CD4-positive, alpha-beta T cell (primary cell): ENCODE measurements at regions of chr1 and their contacts with region 1.

Region 1: GRCh38 chr1:29235955-29236684 is at the start of gene PTPRU:
- DNase-seq: peak; percentile 39 to 89 (median 77)
- ATAC-seq: peak; percentile 88
- H3K4me3 ChIP-seq: peak within 1 kb of the TSS; percentile 39
- H3K4me3 Mint-ChIP-seq: peak within 1 kb of the TSS; percentile 82
- H3K27ac ChIP-seq: no peak within 1 kb of the TSS
- H3K27ac Mint-ChIP-seq: peak within 1 kb of the TSS; percentile 25
- H3K4me1 ChIP-seq: peaks cover 26% of the 10 kb centered on the region
- H3K4me1 Mint-ChIP-seq: peaks cover 28% of the 10 kb centered on the region
- H3K27me3 ChIP-seq: peaks cover 34 to 48% of the 10 kb centered on the region in 2 experiments
- H3K27me3 Mint-ChIP-seq: peaks cover 57% of the 10 kb centered on the region
- CTCF ChIP-seq: peak; percentile 62
- total RNA-seq, gene PTPRU: 0.16 to 0.56 TPM

Region 2: GRCh38 chr1:29706956-29707355 is 470.8 kb after region 1 on chr1:
- CTCF ChIA-PET with region 1: no interaction called
- POLR2A ChIA-PET with region 1: no interaction called
- intact Hi-C with region 1: loop called in 1 of 2 experiments (anchors 5 kb)
- DNase-seq: peak in 3 of 14 experiments; percentile 5 to 23 (median 13)
- ATAC-seq: peak; percentile 59
- H3K4me3 ChIP-seq: no peak overlapping the region
- H3K4me3 Mint-ChIP-seq: no peak overlapping the region
- H3K27ac ChIP-seq: no peak overlapping the region
- H3K27ac Mint-ChIP-seq: no peak overlapping the region
- H3K4me1 ChIP-seq: no peaks in the 10 kb centered on the region
- H3K4me1 Mint-ChIP-seq: no peaks in the 10 kb centered on the region
- H3K27me3 ChIP-seq: peaks cover 27 to 37% of the 10 kb centered on the region in 2 experiments
- H3K27me3 Mint-ChIP-seq: peaks cover 65% of the 10 kb centered on the region
- CTCF ChIP-seq: no peak

Region 3: DNA sequence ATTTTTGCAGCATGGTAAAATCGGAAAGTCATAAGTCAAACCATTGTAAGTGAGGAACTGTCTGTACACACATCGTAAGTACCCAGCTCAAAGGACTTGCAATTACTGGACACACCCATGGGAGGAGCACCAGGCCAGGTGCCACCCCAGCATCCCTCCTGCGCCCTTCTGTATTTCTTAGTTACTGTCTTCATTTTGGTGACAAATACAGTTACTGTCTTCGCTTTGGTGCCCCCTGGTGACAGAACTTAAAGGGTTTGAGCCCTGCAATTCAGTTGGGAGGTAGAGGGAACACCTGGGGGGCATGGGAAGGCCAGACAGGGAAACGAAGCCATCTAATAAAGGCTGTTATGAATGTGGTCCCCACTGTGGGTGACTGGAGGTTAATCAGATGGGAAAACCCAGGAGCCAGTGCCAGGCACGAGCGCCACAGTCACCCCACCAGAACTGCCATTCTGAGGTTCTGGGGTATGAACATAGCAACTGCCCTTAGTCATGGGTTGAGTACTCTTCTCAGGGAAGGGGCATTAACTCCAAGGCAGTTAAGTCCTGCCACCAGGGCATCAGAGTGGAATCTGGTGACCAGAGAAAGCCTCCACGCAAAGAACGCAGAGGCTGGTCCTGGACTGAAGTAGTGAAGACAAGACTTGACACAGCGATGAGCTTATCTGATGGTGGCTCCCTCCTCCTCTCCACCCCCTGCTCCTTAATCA is 613.1 kb after region 1 on chr1:
- CTCF ChIA-PET with region 1: no interaction called
- POLR2A ChIA-PET with region 1: no interaction called
- intact Hi-C with region 1: loop called in 1 of 2 experiments (anchors 1 kb)
- DNase-seq: peak in 11 of 14 experiments; percentile 2 to 58 (median 27)
- ATAC-seq: no peak
- H3K4me3 ChIP-seq: no peak overlapping the region
- H3K4me3 Mint-ChIP-seq: no peak overlapping the region
- H3K27ac ChIP-seq: no peak overlapping the region
- H3K27ac Mint-ChIP-seq: no peak overlapping the region
- H3K4me1 ChIP-seq: no peaks in the 10 kb centered on the region
- H3K4me1 Mint-ChIP-seq: no peaks in the 10 kb centered on the region
- H3K27me3 ChIP-seq: peaks cover 9% of the 10 kb centered on the region in 2 experiments
- H3K27me3 Mint-ChIP-seq: peaks cover 22% of the 10 kb centered on the region
- CTCF ChIP-seq: no peak

Region 4: GRCh38 chr1:30106125-30106524 is 870.0 kb after region 1 on chr1:
- CTCF ChIA-PET with region 1: no interaction called
- POLR2A ChIA-PET with region 1: no interaction called
- intact Hi-C with region 1: loop called in 1 of 2 experiments (anchors 2 kb)
- DNase-seq: peak in 1 of 14 experiments; percentile 4
- ATAC-seq: no peak
- H3K4me3 ChIP-seq: no peak overlapping the region
- H3K4me3 Mint-ChIP-seq: no peak overlapping the region
- H3K27ac ChIP-seq: no peak overlapping the region
- H3K27ac Mint-ChIP-seq: no peak overlapping the region
- H3K4me1 ChIP-seq: no peaks in the 10 kb centered on the region
- H3K4me1 Mint-ChIP-seq: no peaks in the 10 kb centered on the region
- H3K27me3 ChIP-seq: peaks cover 3 to 12% of the 10 kb centered on the region in 2 experiments
- H3K27me3 Mint-ChIP-seq: peaks cover 60% of the 10 kb centered on the region
- CTCF ChIP-seq: peak; percentile 20

Region 5: GRCh38 chr1:30379684-30380624 is 1143.8 kb after region 1 on chr1:
- CTCF ChIA-PET with region 1: interaction called, 9 read pairs
- POLR2A ChIA-PET with region 1: interaction called, 4 read pairs
- intact Hi-C with region 1: loop called (anchors 1 kb)
- DNase-seq: peak in 13 of 14 experiments; percentile 10 to 78 (median 33)
- ATAC-seq: peak; percentile 48
- H3K4me3 ChIP-seq: no peak overlapping the region
- H3K4me3 Mint-ChIP-seq: no peak overlapping the region
- H3K27ac ChIP-seq: no peak overlapping the region
- H3K27ac Mint-ChIP-seq: no peak overlapping the region
- H3K4me1 ChIP-seq: peaks cover 5% of the 10 kb centered on the region
- H3K4me1 Mint-ChIP-seq: no peaks in the 10 kb centered on the region
- H3K27me3 ChIP-seq: peaks cover 4 to 11% of the 10 kb centered on the region in 2 experiments
- H3K27me3 Mint-ChIP-seq: peaks cover 36% of the 10 kb centered on the region
- CTCF ChIP-seq: peak; percentile 75

Region 6: DNA sequence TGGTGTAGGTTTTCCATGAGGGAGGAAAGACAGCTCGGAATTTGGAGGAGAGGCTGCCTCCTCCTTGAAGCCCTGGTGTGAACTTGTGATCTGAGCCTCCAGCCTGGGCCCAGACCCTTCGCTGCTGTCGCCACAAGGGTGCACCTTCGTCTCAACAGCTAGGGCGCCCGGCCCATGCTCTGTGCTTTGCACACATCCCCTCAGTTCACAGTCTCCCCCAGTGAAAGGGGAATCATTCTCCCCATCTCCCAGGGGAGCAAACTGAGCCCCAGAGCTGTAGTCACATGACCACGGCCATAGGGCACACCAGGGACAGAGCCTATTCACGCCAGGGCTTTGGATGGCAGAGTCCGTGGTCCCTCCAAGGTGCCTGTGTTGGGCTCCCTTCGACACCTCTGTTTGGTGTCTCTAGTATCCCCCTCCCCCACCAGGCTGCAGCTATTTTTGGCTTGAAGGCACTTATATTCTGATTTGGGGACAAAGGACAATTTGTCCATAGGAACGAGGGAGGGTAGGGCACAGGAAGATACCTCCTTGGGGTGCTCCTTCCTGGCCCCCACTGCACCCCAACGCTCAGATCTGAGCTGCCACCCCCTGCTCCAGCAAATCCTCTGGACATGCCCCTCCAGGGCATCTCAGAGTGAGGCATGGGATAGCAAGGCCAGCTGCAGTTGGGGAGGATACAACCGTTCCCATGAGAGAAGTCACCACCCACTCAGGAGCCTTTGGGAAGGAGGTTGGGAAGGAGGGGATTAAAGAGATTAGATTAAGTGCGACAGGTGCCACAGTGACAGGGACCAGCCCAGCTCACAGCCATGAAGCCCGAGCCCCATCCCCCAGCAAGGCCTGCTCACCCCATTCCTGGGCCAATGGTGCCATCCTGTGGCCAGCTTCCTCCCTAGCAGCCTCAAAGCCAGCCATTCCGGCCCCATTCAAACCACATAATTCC is 1471.6 kb after region 1 on chr1:
- CTCF ChIA-PET with region 1: no interaction called
- POLR2A ChIA-PET with region 1: no interaction called
- intact Hi-C with region 1: loop called in 1 of 2 experiments (anchors 2 kb)
- DNase-seq: peak; percentile 40 to 74 (median 56)
- ATAC-seq: peak; percentile 88
- H3K4me3 ChIP-seq: no peak overlapping the region
- H3K4me3 Mint-ChIP-seq: no peak overlapping the region
- H3K27ac ChIP-seq: no peak overlapping the region
- H3K27ac Mint-ChIP-seq: no peak overlapping the region
- H3K4me1 ChIP-seq: no peaks in the 10 kb centered on the region
- H3K4me1 Mint-ChIP-seq: no peaks in the 10 kb centered on the region
- H3K27me3 ChIP-seq: peaks cover 0 to 6% of the 10 kb centered on the region in 2 experiments
- H3K27me3 Mint-ChIP-seq: peaks cover 19% of the 10 kb centered on the region
- CTCF ChIP-seq: peak; percentile 50